ENCODE measurements at regions of chr13 and their contacts with region 1.

Region 1: GRCh38 chr13:104408733-104409132 is 1342.5 kb upstream of the SLC10A2 start:
- DNase-seq: no peak
- H3K4me3 ChIP-seq: no peak overlapping the region
- H3K27ac ChIP-seq: no peak overlapping the region
- H3K27me3 ChIP-seq: no peaks in the 10 kb centered on the region
- CTCF ChIP-seq: no peak

Region 2: GRCh38 chr13:104389691-104390090 is 19.0 kb before region 1 on chr13:
- CTCF ChIA-PET with region 1: no interaction called
- POLR2A ChIA-PET with region 1: interaction called, 11 read pairs
- DNase-seq: no peak
- H3K4me3 ChIP-seq: no peak overlapping the region
- H3K27ac ChIP-seq: no peak overlapping the region
- H3K27me3 ChIP-seq: no peaks in the 10 kb centered on the region
- CTCF ChIP-seq: no peak

Region 3: DNA sequence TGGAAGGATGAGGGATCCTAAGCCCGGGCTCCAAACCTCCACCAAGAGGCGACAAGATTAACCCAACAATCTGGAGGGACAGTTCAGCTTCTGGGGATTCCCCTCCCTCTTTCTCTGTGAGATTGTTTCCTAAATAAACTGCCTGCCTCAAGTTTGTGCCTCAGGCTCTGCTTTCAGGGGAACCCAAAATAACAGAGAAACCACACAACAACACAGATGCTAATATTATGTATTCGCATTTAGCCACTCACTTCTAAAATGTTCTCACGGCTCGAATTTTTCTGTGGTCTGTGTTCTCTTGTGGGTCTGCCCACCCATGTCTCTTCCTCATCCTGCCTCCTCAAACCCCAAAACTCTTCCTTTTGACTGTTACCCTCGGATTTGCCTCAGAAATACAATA is 38.6 kb after region 1 on chr13:
- CTCF ChIA-PET with region 1: no interaction called
- POLR2A ChIA-PET with region 1: no interaction called
- DNase-seq: no peak
- H3K4me3 ChIP-seq: no peak overlapping the region
- H3K27ac ChIP-seq: no peak overlapping the region
- H3K27me3 ChIP-seq: no peaks in the 10 kb centered on the region
- CTCF ChIP-seq: no peak

Measured in AG04450 (cell line).